ENCODE measurements at regions of chr3 and their contacts with region 1.

Region 1: DNA sequence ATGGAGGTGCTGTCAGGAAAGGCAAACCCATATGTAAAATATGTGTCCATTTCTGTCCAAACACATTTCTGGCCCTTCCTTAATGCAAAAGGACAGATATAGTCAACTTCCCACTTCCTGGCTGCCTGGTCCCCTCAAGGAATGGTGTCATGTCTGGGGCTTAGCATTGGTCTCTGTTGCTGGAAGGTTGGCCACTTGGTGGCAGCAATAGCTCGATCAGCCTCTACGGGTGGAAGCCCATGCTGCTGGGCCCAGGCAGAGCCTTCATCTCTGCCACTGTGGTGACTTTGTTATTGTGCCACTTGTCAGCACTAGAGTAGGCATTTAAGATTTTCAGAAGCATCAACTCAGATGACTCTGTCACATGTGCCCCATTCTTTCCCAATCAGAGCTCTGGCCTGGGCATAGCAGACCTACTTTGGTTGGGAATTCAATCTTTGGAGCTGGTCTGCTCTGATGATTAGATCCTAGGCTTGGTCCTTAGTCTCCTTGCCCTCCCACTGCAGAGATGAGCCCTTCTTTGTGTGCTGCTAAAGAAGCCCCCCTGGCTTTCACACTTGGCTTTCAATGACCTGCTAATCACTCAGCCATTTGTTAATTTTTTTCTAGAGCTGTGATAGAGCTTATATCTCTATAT is 51.0 kb upstream of the SPSB4 start:
- DNase-seq: peak; percentile 44
- CTCF ChIP-seq: peak; percentile 66

Region 2: GRCh38 chr3:140941434-140942220 is 58.5 kb before region 1 on chr3 and contains the start of gene SLC25A36:
- CTCF ChIA-PET with region 1: no interaction called
- POLR2A ChIA-PET with region 1: no interaction called
- DNase-seq: peak; percentile 95
- CTCF ChIP-seq: no peak

Region 3: DNA sequence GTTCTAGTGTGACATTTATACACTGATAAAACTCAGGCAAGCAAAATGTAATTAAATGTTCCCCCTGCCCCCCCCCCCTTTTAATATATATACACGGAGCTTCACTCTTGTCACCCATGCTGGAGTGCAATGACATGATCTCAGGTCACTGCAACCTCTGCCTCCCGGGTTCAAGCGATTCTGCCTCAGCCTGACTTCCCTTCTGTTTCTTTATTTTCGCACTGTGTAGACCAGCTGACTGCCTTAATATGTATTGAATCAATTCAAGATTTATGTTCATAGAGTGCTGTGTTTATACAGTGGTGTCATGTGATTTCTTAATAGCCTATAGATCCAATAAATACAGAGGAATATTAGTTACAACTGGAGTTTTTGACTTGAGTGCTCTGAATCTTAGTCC is 19.5 kb before region 1 on chr3:
- CTCF ChIA-PET with region 1: interaction called, 13 read pairs
- POLR2A ChIA-PET with region 1: no interaction called
- DNase-seq: no peak
- CTCF ChIP-seq: no peak

Region 4: DNA sequence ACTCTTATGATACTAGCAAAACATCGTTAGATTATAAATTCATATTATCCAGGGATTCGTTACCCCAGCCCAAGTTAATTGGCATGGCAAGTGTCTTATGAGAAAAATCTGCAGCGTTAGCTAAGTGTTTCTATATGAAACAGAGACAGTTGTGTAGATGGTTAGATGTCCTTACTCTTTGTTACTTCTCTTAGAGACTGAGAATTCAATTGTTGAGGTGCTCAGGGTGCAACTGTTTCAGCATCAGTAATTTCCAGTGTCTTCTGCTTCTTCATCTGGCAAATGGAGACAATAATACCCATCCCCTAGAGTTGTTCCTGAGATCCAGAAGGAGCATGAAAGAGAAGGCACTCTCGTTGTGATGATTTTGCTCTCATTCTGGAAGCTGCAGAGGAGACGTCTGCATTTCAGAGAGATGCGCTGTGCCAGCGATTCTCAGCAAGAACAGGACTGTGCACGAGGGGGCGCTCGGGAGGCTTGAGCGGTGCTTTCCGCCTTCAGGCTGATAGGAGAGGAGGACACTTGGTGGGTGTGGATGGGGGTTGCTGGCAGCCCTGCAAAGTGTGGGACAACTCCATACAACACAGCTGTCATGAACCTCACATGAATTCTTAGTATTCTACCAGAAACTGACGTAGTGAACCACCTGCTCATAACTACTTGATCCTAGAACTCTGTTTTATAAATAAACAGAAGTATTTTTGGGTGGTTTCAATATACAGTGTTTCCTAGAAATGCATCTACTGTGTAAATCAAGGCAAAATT is 11.3 kb after region 1 on chr3:
- CTCF ChIA-PET with region 1: interaction called, 67 read pairs
- POLR2A ChIA-PET with region 1: no interaction called
- DNase-seq: peak; percentile 64
- CTCF ChIP-seq: peak; percentile 88

Region 5: DNA sequence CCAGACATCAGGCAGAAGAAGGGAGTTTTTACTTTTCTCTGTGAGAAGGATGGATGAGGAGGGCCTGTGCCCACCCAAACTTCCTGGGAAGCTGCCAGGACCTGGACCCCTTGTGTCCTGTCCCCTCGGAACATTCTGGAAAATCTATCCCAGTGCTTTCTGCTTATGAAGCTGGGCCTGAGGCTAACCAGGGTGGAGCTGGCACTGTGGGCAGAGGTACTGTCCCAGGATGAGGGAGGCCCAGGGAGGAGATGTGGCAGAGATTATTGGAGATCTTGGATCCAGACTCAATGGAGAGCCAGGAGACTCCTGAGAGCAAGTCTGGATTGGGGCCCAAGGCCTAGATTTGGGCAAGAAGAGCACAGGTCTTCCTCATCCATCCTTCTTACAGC is 95.4 kb after region 1 on chr3:
- CTCF ChIA-PET with region 1: no interaction called
- POLR2A ChIA-PET with region 1: no interaction called
- DNase-seq: no peak
- CTCF ChIP-seq: no peak

Region 6: DNA sequence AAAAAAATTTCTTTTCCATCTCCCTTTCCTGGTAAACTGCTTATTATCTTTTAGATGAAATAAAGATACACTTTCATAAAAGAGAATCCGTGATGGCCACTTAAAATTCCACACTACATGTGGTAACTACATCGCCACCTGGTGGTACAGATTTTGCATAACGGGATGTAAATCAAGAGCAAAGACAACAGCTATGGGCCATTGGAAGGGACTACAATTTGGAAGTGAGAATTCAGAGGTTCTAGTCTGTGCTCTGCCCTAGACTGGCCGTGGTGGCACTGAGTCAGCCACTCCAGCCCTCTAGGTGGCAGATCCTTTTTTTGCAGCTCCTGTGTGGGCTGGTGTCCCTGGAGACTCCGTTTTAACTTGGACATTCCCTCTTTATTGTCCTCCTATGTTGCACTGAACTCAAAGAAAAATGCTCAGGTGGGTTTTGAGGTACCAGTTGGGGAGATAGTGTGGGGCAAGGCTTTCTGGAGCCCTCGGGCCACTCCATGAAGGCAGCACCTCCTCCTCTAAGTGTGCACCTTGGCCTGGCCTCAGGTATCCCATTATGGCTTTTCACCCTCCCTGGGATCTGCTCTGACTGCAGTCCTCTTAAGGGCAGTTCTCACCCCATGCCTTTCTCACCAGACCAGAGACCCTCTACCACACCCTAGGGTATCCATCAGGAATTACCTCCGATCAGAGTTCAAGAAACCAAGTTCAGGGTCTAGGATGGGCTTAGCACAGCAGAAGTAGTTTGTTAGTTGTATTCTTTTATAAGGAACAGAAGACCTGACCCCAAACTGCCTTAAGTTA is 105.9 kb after region 1 on chr3:
- CTCF ChIA-PET with region 1: interaction called, 25 read pairs
- POLR2A ChIA-PET with region 1: no interaction called
- DNase-seq: peak; percentile 65
- CTCF ChIP-seq: peak; percentile 82